SK-N-SH (cell line): ENCODE measurements at regions of chr2 and their contacts with region 1.

Region 1: DNA sequence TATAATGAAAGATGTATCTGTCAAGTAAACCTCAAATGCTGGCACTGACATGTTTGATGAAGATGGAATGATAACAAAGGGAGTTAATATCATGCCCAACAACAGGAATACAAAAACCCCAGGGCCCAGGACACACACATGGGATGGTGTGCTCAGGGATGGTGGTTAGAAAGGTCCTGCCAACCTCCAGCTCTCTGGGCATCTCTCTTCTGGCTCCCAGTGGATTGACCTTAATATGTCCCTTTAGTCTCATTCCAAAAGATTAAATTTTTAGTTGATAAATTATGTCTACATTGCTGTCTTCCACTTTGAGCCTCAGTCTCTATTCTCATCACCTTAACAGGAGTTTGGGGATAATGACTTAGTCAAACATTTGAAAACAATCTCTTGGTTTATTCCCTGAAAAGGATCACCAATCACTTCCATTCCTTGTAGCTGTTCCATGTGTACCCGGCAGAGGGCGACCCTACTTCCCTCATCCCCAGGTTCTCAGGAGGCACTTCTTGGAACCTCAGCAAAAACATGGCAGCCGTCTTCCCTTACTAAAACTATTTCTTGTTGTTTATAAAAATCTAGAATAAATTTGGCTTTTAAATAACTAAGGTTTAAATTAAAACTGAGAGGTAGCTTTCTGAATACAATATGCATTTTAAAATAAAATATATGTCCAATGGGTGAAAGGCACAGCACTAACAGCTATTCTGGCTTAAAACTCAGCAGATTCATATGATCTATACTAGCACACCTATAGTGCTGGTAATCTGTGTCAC is 29.6 kb downstream of the MCEE start:
- DNase-seq: peak; percentile 79
- H3K4me3 ChIP-seq: no peak overlapping the region; a peak in 1 of 4 replicates
- H3K27ac ChIP-seq: no peak overlapping the region
- H3K4me1 ChIP-seq: no peaks in the 10 kb centered on the region
- H3K27me3 ChIP-seq: no peaks in the 10 kb centered on the region
- CTCF ChIP-seq: peak; percentile 76
- EP300 ChIP-seq: no peak
- RAD21 ChIP-seq: peak; percentile 59

Region 2: DNA sequence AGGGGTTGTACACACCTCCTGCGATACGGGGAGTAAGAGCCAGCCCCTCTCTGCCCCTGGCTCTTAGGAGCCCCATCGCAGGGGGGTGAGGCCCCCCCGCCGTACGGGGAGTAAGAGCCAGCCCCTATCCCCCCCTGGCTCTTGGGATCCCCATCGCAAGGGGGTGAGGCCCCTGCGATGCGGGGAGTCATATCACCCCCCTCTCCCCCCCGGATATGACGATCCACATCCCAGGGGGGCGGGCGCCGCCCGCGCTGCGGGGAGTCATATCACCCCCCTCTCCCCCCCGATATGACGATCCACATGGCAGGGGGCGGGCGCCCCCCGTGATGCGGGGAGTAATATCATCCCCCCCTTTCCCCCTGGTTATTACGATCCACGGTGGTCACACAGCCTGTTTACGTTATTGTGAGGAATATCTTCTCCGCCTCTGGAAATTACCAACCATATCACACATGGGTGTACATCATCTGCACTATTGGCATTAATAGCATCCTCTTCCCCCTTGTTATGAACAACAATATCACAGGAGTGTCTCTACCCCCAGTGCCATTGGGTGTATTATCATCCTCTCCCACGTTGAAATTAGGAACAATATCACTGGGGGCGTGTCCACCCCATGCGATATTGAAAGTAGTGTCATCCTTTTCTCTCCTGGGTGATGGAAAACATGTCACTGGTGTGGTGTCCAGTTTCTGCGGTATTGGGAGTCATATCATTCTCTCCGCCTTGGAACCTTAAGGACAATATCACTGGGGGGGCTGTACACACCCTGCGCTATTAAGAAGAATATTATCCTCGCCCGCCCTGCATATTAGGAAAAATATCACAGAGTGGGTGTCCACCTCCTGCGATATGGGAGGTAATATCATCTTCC is 56.6 kb before region 1 on chr2:
- CTCF ChIA-PET with region 1: no interaction called
- POLR2A ChIA-PET with region 1: no interaction called
- DNase-seq: peak; percentile 25
- H3K4me3 ChIP-seq: peak overlapping the region; percentile 46 to 58
- H3K27ac ChIP-seq: no peak overlapping the region
- H3K4me1 ChIP-seq: no peaks in the 10 kb centered on the region; a peak in 1 of 4 replicates
- H3K27me3 ChIP-seq: peaks cover 9% of the 10 kb centered on the region; the same call in 1 of the 2 replicates
- CTCF ChIP-seq: no peak
- EP300 ChIP-seq: no peak
- RAD21 ChIP-seq: no peak

Region 3: DNA sequence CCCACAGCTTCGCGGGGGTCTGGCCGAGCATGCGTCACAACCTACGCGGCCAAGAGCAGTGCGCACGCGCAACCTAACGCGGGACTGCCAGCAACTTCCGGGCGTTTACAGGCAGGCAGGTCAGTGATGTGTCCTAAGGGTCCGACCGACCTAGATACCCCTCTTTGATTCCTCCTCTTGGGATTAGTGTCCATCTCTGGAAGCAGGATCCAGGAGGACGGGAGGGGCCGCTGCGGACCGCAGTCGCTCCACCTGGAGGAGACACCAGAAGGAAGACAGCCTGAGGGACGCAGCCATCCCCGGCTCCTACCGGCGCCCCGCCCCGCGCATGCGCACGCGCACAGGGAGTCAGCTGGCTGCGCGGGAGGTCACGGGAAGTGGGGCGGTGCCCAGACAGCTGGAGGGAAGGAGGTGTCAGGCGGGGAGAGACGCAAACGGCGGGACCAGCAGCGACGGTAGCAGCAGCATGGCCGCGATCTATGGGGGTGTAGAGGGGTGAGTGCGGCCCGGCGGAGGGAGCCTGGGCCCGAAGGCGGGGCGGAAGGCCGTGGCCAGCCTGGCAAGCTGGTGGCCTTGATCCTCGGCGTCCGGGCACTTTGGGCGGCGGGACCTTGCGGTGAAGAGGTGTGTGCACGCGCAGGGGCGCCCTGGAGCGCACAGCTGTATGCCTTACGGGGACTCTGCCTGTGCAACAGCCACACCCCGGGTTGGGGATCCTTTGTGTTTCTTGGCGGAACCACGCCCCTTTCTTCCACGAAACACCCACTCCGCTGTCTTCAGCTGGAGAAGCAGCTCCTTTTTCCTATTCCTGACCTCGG is 32.0 kb before region 1 on chr2 and contains the start of gene NAGK:
- CTCF ChIA-PET with region 1: interaction called, 10 read pairs
- POLR2A ChIA-PET with region 1: interaction called, 3 read pairs
- DNase-seq: peak; percentile 99
- H3K4me3 ChIP-seq: peak within 1 kb of the TSS; percentile 92 to 98
- H3K27ac ChIP-seq: peak within 1 kb of the TSS; percentile 92 to 97
- H3K4me1 ChIP-seq: peaks cover 5 to 18% of the 10 kb centered on the region in 2 experiments; a peak in 3 of 4 replicates
- H3K27me3 ChIP-seq: no peaks in the 10 kb centered on the region; the same call in 1 of the 2 replicates
- CTCF ChIP-seq: no peak
- EP300 ChIP-seq: no peak
- RAD21 ChIP-seq: no peak
- polyA plus RNA-seq, gene NAGK: 74.8 and 83.6 TPM in 2 replicates

Region 4: DNA sequence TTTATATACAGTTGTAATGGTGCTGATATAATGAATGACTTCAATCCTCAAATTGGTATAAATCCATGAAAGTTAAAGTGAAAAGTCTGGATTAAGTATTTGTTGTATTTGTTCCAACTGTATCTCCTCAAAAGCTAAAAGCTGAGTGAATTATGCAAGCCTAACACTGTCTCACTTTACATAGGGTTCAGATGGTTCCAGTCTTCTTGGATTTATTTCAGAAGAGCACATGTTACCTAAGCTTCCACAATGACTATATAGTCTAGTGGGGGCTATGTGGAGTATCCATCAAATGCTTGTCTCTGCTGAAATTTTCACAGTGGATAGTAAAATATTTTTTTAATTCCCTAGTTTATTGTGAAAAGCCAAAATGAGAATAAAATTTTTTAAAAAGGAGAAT is 16.7 kb after region 1 on chr2:
- CTCF ChIA-PET with region 1: interaction called, 10 read pairs
- POLR2A ChIA-PET with region 1: interaction called, 3 read pairs
- DNase-seq: no peak
- H3K4me3 ChIP-seq: no peak overlapping the region
- H3K27ac ChIP-seq: no peak overlapping the region
- H3K4me1 ChIP-seq: no peaks in the 10 kb centered on the region
- H3K27me3 ChIP-seq: no peaks in the 10 kb centered on the region
- CTCF ChIP-seq: no peak
- EP300 ChIP-seq: no peak
- RAD21 ChIP-seq: no peak

Region 5: GRCh38 chr2:71190656-71191569 is 90.5 kb after region 1 on chr2:
- CTCF ChIA-PET with region 1: interaction called, 24 read pairs
- POLR2A ChIA-PET with region 1: no interaction called
- DNase-seq: peak; percentile 24
- H3K4me3 ChIP-seq: no peak overlapping the region
- H3K27ac ChIP-seq: no peak overlapping the region
- H3K4me1 ChIP-seq: peaks cover 0 to 2% of the 10 kb centered on the region in 2 experiments; a peak in 1 of 4 replicates
- H3K27me3 ChIP-seq: no peaks in the 10 kb centered on the region; the same call in 1 of the 2 replicates
- CTCF ChIP-seq: peak; percentile 44
- EP300 ChIP-seq: no peak
- RAD21 ChIP-seq: peak; percentile 67

Region 6: DNA sequence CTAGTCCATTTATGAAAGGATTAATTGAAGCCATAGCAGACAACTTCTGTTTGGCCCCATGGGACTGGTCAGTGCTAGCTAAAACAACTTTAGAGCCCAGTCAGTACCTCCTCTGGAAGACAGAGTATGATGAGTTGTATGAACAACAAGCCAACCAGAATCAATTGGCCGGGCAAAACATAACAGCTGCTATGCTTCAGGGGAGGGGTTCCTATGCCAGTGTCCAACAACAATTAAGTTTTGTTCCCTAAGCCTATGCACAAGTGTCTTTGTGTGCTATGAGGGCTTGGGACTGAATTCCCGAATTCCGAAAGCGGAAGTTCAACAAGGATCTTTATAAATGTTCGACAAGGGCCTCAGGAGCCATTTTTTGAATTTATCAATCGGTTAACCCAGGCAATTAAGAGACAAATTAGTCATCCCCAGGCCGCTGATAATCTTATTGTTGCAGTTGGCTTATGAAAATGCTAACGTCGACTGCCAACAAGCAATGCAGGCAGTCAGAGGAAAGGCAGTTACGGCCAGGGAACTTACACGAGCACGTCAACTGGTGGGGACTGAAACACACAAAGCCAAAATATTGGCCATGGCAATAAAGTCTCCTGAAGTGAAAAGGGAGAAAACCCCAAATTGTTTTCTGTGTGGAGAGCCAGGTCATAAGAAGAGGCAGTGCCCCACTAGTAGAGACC is 289.1 kb after region 1 on chr2:
- CTCF ChIA-PET with region 1: no interaction called
- POLR2A ChIA-PET with region 1: no interaction called
- DNase-seq: no peak
- H3K4me3 ChIP-seq: no peak overlapping the region
- H3K27ac ChIP-seq: no peak overlapping the region
- H3K4me1 ChIP-seq: peaks cover 0 to 4% of the 10 kb centered on the region in 2 experiments; a peak in 1 of 4 replicates
- H3K27me3 ChIP-seq: no peaks in the 10 kb centered on the region
- CTCF ChIP-seq: no peak
- EP300 ChIP-seq: no peak
- RAD21 ChIP-seq: no peak